ENCODE measurements at regions of chr10 and their contacts with region 1.

Region 1: GRCh38 chr10:72273410-72274212 is at the start of gene DDIT4:
- DNase-seq: peak; percentile 93
- ATAC-seq: peak; percentile 87
- H3K4me3 ChIP-seq: peak within 1 kb of the TSS; percentile 81 to 99 (median 98)
- H3K27ac ChIP-seq: peak within 1 kb of the TSS; percentile 81
- H3K4me1 ChIP-seq: peaks cover 61% of the 10 kb centered on the region
- H3K27me3 ChIP-seq: no peaks in the 10 kb centered on the region; a peak in 1 of 5 replicates
- CTCF ChIP-seq: no peak; the same call in 1 of the 2 replicates
- EP300 ChIP-seq: peak in 1 of 2 experiments; percentile 65; a peak in 2 of 4 replicates
- POLR2A ChIP-seq: peak in 1 of 2 experiments; percentile 100; a peak in 2 of 4 replicates
- RAD21 ChIP-seq: peak; percentile 75
- total RNA-seq, gene DDIT4: 35.2 and 35.6 TPM in 2 replicates

Region 2: DNA sequence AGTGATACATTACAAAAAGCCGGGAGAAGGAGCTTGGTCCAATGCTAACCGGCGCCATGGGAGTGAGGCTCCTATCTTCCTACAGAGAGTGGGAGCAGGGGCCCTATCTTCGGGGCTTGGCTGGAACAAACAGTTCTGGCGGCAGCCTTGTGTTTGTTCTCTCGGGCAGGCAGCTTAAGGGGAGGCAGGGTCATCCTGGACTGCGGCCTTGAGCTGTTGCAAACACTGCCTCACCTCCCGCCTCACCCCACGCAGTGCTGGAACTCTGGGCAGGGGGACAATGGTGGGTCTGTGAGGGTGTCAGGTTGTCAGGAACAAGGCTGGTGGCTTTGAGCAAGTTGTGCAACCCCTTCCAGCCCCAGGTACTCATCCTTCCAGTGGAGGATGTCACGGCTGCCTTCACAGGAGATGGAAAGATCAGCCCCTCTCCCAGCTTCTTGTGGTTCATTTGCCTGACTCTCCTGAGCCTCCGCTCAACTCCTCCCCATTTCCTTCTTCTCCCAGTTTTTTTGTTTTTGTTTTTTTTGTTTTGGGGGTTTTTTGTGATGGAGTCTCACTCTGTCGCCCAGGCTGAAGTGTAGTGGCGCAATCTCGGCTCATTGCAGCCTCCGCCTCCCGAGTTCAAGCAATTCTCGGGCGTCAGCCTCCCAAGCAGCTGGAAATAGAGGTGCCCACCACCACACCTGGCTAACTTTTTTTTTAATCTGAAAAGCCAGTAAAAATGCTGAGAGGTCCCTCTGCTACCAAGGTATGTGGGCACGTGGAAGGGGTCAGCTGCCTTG is 242.7 kb before region 1 on chr10:
- CTCF ChIA-PET with region 1: no interaction called
- POLR2A ChIA-PET with region 1: interaction called, 12 read pairs
- in situ Hi-C with region 1: no loop called
- intact Hi-C with region 1: no loop called
- DNase-seq: peak; percentile 97
- ATAC-seq: peak; percentile 89
- H3K4me3 ChIP-seq: peak overlapping the region; percentile 45 to 66 (median 58); a peak in 5 of 6 replicates
- H3K27ac ChIP-seq: peak overlapping the region; percentile 99
- H3K4me1 ChIP-seq: peaks cover 99% of the 10 kb centered on the region
- H3K27me3 ChIP-seq: no peaks in the 10 kb centered on the region
- CTCF ChIP-seq: peak; percentile 29; the same call in 1 of the 2 replicates
- EP300 ChIP-seq: peak; percentile 97 to 99
- POLR2A ChIP-seq: peak; percentile 65 to 82
- RAD21 ChIP-seq: peak; percentile 49; the same call in 1 of the 2 replicates

Region 3: GRCh38 chr10:72238392-72239175 is 35.0 kb before region 1 on chr10:
- CTCF ChIA-PET with region 1: no interaction called
- POLR2A ChIA-PET with region 1: interaction called, 15 read pairs
- in situ Hi-C with region 1: no loop called
- intact Hi-C with region 1: no loop called
- DNase-seq: no peak
- ATAC-seq: no peak
- H3K4me3 ChIP-seq: no peak overlapping the region
- H3K27ac ChIP-seq: no peak overlapping the region
- H3K4me1 ChIP-seq: peaks cover 32% of the 10 kb centered on the region
- H3K27me3 ChIP-seq: no peaks in the 10 kb centered on the region
- CTCF ChIP-seq: no peak
- EP300 ChIP-seq: no peak
- POLR2A ChIP-seq: no peak
- RAD21 ChIP-seq: no peak

Region 4: GRCh38 chr10:72254813-72255568 is 18.6 kb before region 1 on chr10:
- CTCF ChIA-PET with region 1: no interaction called
- POLR2A ChIA-PET with region 1: interaction called, 155 read pairs
- in situ Hi-C with region 1: no loop called
- intact Hi-C with region 1: no loop called
- DNase-seq: no peak
- ATAC-seq: peak; percentile 85
- H3K4me3 ChIP-seq: peak overlapping the region; percentile 54 to 72 (median 57)
- H3K27ac ChIP-seq: peak overlapping the region; percentile 74
- H3K4me1 ChIP-seq: peaks cover 93% of the 10 kb centered on the region
- H3K27me3 ChIP-seq: no peaks in the 10 kb centered on the region
- CTCF ChIP-seq: peak; percentile 51; the same call in 1 of the 2 replicates
- EP300 ChIP-seq: peak in 1 of 2 experiments; percentile 19; a peak in 1 of 4 replicates
- POLR2A ChIP-seq: peak in 1 of 2 experiments; percentile 70; a peak in 2 of 4 replicates
- RAD21 ChIP-seq: no peak

Region 5: DNA sequence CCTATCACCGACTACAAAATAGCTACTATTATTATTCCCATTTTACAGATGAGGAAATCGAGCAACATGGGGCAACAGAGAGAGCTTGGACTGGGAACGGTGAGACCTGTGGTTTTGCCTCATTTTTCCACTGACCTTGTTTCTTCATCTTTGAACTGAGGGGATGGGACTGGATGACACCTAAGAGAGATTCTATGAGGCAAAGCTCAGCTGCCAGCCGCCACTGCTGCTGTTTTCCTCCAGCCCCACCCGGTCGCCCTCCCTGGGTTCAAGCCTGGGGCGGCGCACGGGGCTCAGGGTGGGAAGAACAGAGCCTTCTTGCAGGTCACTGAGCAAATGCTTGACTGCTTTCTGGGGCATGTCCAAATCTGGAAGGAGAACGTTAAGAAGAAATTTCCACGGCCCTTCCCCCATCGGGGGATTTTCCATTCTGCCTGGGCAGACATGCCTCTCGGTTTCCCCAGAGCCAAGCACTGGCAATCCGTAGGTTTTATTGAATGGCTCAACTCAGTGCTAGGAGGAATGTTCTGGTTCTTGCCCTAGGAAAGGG is 12.4 kb after region 1 on chr10:
- CTCF ChIA-PET with region 1: no interaction called
- POLR2A ChIA-PET with region 1: interaction called, 20 read pairs
- in situ Hi-C with region 1: no loop called
- intact Hi-C with region 1: no loop called
- DNase-seq: peak; percentile 41
- ATAC-seq: peak; percentile 60
- H3K4me3 ChIP-seq: peak overlapping the region in 1 of 3 experiments; percentile 34; a peak in 3 of 6 replicates
- H3K27ac ChIP-seq: no peak overlapping the region
- H3K4me1 ChIP-seq: peaks cover 21% of the 10 kb centered on the region
- H3K27me3 ChIP-seq: 0 out of 5 replicates have a peak, but pooled peaks cover 0 to 1% of the 10 kb centered on the region in 2 experiments
- CTCF ChIP-seq: no peak
- EP300 ChIP-seq: no peak
- POLR2A ChIP-seq: no peak
- RAD21 ChIP-seq: no peak

Region 6: GRCh38 chr10:72297968-72298773 is 24.6 kb after region 1 on chr10:
- CTCF ChIA-PET with region 1: no interaction called
- POLR2A ChIA-PET with region 1: interaction called, 11 read pairs
- in situ Hi-C with region 1: no loop called
- intact Hi-C with region 1: no loop called
- DNase-seq: no peak
- ATAC-seq: no peak
- H3K4me3 ChIP-seq: no peak overlapping the region
- H3K27ac ChIP-seq: no peak overlapping the region
- H3K4me1 ChIP-seq: peaks cover 40% of the 10 kb centered on the region
- H3K27me3 ChIP-seq: no peaks in the 10 kb centered on the region
- CTCF ChIP-seq: no peak
- EP300 ChIP-seq: no peak
- POLR2A ChIP-seq: no peak
- RAD21 ChIP-seq: no peak

Region 7: GRCh38 chr10:72319416-72320254 is 46.0 kb after region 1 on chr10:
- CTCF ChIA-PET with region 1: no interaction called
- POLR2A ChIA-PET with region 1: interaction called, 322 read pairs
- in situ Hi-C with region 1: no loop called
- intact Hi-C with region 1: loop called (anchors 2 kb)
- DNase-seq: peak; percentile 86
- ATAC-seq: peak; percentile 72
- H3K4me3 ChIP-seq: peak overlapping the region; percentile 54 to 75 (median 55)
- H3K27ac ChIP-seq: peak overlapping the region; percentile 98
- H3K4me1 ChIP-seq: peaks cover 94% of the 10 kb centered on the region
- H3K27me3 ChIP-seq: no peaks in the 10 kb centered on the region
- CTCF ChIP-seq: no peak; the same call in 1 of the 2 replicates
- EP300 ChIP-seq: peak in 1 of 2 experiments; percentile 87; a peak in 3 of 4 replicates
- POLR2A ChIP-seq: peak in 1 of 2 experiments; percentile 51; a peak in 1 of 4 replicates
- RAD21 ChIP-seq: peak; percentile 42

Region 8: GRCh38 chr10:72612203-72612826 is 338.7 kb after region 1 on chr10:
- CTCF ChIA-PET with region 1: no interaction called
- POLR2A ChIA-PET with region 1: no interaction called
- in situ Hi-C with region 1: no loop called
- intact Hi-C with region 1: no loop called
- DNase-seq: no peak
- ATAC-seq: peak; percentile 54; the same call in 2 of the 3 replicates
- H3K4me3 ChIP-seq: no peak overlapping the region
- H3K27ac ChIP-seq: no peak overlapping the region
- H3K4me1 ChIP-seq: peaks cover 15% of the 10 kb centered on the region
- H3K27me3 ChIP-seq: no peaks in the 10 kb centered on the region
- CTCF ChIP-seq: no peak
- EP300 ChIP-seq: no peak
- POLR2A ChIP-seq: no peak
- RAD21 ChIP-seq: no peak